Activated T-helper 2 cell treated with anti-CD3 and anti-CD28 coated beads, Interferon-gamma antibody, Interleukin-2, Interleukin-4, amounts not matched to agents 10 μg/mL and 5 μg/mL and 100 μg/mL, durations not matched to agents 14 hours and 24 hours and 36 hours (primary cell): ENCODE measurements at regions of chr12 and their contacts with region 1.

Region 1: GRCh38 chr12:19482551-19483109 is 43.3 kb downstream of the AEBP2 start:
- DNase-seq: peak; percentile 9
- H3K4me3 Mint-ChIP-seq: peak overlapping the region; percentile 7
- H3K27ac Mint-ChIP-seq: peak overlapping the region; percentile 86
- H3K4me1 Mint-ChIP-seq: peaks cover 43% of the 10 kb centered on the region
- H3K27me3 Mint-ChIP-seq: no peaks in the 10 kb centered on the region

Region 2: DNA sequence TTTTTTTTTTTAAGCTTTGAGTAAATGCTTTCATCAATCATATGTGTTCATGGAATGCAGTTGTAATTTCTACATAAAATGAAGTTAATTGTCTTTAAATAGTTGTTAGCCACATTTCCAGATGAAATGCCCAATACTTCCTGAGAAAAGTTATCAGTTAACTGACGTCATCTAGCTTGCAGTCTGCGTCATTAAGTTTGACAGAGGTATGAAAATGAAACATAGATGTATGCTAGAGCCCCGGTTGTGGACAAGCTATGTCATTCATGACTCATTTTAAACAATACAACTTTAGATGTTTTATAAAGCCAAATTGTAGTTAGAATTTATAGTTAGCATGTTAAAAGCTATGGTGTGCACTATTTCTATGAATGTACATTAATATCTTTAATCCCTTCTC is 262.4 kb before region 1 on chr12:
- intact Hi-C with region 1: no loop called
- DNase-seq: no peak
- H3K4me3 Mint-ChIP-seq: no peak overlapping the region
- H3K27ac Mint-ChIP-seq: no peak overlapping the region
- H3K4me1 Mint-ChIP-seq: peaks cover 1% of the 10 kb centered on the region
- H3K27me3 Mint-ChIP-seq: no peaks in the 10 kb centered on the region

Region 3: GRCh38 chr12:19439059-19440018 is 43.3 kb before region 1 on chr12 and contains the start of gene AEBP2:
- intact Hi-C with region 1: loop called (anchors 2 kb)
- DNase-seq: peak; percentile 90
- H3K4me3 Mint-ChIP-seq: peak within 1 kb of the TSS; percentile 98
- H3K27ac Mint-ChIP-seq: peak within 1 kb of the TSS; percentile 99
- H3K4me1 Mint-ChIP-seq: peaks cover 51% of the 10 kb centered on the region
- H3K27me3 Mint-ChIP-seq: no peaks in the 10 kb centered on the region
- total RNA-seq, gene AEBP2: 64.3 and 67.6 TPM in 2 replicates

Region 4: GRCh38 chr12:19462406-19462805 is 20.2 kb before region 1 on chr12:
- intact Hi-C with region 1: loop called (anchors 2 kb)
- DNase-seq: no peak
- H3K4me3 Mint-ChIP-seq: no peak overlapping the region
- H3K27ac Mint-ChIP-seq: no peak overlapping the region
- H3K4me1 Mint-ChIP-seq: peaks cover 27% of the 10 kb centered on the region
- H3K27me3 Mint-ChIP-seq: no peaks in the 10 kb centered on the region

Region 5: GRCh38 chr12:19498099-19498498 is 15.5 kb after region 1 on chr12:
- intact Hi-C with region 1: loop called (anchors 2 kb)
- DNase-seq: no peak
- H3K4me3 Mint-ChIP-seq: peak overlapping the region; percentile 7
- H3K27ac Mint-ChIP-seq: peak overlapping the region; percentile 64
- H3K4me1 Mint-ChIP-seq: peaks cover 13% of the 10 kb centered on the region
- H3K27me3 Mint-ChIP-seq: no peaks in the 10 kb centered on the region